ENCODE measurements at regions of chr7 and their contacts with region 1.

Region 1: DNA sequence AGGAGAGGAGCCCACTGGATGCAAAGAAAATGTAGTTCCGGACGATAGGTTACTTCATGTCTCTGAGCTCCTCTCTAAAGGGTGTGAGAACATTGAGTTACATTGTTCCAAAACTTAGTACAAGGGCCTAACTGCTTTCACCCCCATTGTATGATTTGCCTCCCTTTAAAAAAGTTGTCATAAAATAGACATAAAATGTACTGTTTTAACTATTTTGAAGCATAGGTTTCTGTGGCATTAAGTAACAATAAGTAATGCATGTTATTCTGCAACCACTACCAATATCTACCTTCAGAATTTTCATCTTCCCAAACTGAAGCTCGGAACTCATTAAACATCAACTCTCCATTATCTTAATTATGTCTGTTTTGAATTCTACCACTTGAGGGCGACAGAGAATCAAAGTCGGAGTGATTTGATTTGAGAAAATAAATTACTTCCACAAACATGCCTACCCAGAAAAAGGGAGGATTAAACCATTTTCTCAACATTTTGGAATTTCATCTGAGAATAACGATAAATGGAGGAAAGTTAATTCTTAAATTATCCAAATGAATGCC is 2.7 kb downstream of the IGFBP1 start:
- DNase-seq: peak in 3 of 9 donors; percentile 3 to 14 (median 9)
- ATAC-seq: no peak
- H3K4me3 ChIP-seq: no peak overlapping the region
- H3K4me3 Mint-ChIP-seq: no peak overlapping the region
- H3K27ac ChIP-seq: no peak overlapping the region
- H3K27ac Mint-ChIP-seq: no peak overlapping the region
- H3K4me1 ChIP-seq: no peaks in the 10 kb centered on the region
- H3K4me1 Mint-ChIP-seq: peaks cover 0 to 3% (median 0%) of the 10 kb centered on the region in 7 donors
- H3K27me3 ChIP-seq: no peaks in the 10 kb centered on the region
- H3K27me3 Mint-ChIP-seq: peaks cover 53 to 80% (median 65%) of the 10 kb centered on the region in 5 donors

Region 2: DNA sequence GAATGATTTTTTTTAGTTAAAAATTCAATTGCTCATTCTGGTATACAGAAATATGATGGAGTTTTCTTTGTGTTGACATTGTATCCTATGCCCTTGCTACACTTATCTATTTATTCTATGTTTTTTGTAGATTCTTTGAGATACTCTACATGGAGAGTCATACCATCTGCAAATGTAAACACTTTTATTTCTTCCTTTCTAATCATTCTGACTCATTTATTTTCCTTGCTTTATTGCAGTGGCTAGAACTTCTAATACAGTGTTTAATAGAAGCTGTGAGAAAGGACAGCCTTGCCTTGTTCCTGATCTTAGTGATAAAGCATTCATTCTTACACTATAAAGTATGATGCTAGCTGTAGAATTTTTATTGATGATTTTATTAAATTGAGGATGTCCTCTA is 40.0 kb after region 1 on chr7:
- CTCF ChIA-PET with region 1: no interaction called
- POLR2A ChIA-PET with region 1: no interaction called
- intact Hi-C with region 1: no loop called
- DNase-seq: no peak
- ATAC-seq: no peak
- H3K4me3 ChIP-seq: no peak overlapping the region
- H3K4me3 Mint-ChIP-seq: no peak overlapping the region
- H3K27ac ChIP-seq: no peak overlapping the region
- H3K27ac Mint-ChIP-seq: no peak overlapping the region
- H3K4me1 ChIP-seq: no peaks in the 10 kb centered on the region
- H3K4me1 Mint-ChIP-seq: peaks cover 0 to 4% (median 0%) of the 10 kb centered on the region in 7 donors
- H3K27me3 ChIP-seq: no peaks in the 10 kb centered on the region
- H3K27me3 Mint-ChIP-seq: peaks cover 4 to 31% (median 14%) of the 10 kb centered on the region in 5 donors

Region 3: DNA sequence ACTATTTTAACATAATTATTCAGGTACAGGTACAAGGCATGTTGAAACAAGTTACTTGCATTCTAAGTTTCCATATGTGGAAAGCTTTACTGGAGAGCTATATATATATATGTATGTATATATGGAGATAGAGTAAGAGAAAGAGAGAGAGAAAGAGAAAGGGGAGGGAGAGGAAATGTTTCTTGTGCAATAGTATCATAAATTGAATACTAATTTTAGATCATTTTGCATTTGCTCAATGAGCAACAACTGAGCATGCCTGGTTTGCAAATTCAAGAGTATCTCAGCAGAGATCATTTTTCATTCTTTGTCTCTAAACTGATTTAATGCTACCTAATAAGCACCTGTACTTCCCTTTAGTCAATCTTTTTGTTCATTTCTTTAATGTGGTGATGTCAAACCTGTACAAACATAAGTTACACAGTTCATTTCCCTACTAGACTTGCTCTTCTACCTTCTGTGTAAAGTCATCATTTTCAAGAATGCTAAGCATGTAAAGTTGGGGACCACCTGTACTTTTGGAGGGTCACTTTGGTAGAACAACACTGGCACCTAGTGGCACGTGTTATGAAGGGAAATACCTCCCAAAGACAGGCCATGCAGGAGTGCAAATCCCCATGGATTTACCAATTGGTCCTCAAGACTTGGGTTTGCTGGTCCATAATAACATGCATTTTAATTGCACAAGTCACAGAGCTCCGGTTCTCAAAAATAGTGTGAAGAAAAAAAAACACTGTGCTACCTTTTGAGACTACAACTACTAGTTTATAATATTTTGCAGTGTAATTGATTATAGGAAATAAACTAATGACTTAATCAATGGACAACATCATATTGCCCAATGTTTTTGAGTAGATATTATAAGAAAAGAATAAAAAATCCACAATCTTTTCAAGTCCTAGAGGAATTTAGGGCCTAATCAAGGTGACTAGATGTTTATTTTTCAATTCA is 461.3 kb after region 1 on chr7:
- CTCF ChIA-PET with region 1: no interaction called
- POLR2A ChIA-PET with region 1: no interaction called
- intact Hi-C with region 1: loop called in 1 of 2 experiments (anchors 1 kb)
- DNase-seq: peak in 2 of 9 donors; percentile 1 to 4
- ATAC-seq: no peak
- H3K4me3 ChIP-seq: no peak overlapping the region
- H3K4me3 Mint-ChIP-seq: no peak overlapping the region
- H3K27ac ChIP-seq: no peak overlapping the region
- H3K27ac Mint-ChIP-seq: no peak overlapping the region
- H3K4me1 ChIP-seq: no peaks in the 10 kb centered on the region
- H3K4me1 Mint-ChIP-seq: no peaks in the 10 kb centered on the region
- H3K27me3 ChIP-seq: no peaks in the 10 kb centered on the region
- H3K27me3 Mint-ChIP-seq: peaks cover 0 to 7% (median 0%) of the 10 kb centered on the region in 5 donors

Region 4: DNA sequence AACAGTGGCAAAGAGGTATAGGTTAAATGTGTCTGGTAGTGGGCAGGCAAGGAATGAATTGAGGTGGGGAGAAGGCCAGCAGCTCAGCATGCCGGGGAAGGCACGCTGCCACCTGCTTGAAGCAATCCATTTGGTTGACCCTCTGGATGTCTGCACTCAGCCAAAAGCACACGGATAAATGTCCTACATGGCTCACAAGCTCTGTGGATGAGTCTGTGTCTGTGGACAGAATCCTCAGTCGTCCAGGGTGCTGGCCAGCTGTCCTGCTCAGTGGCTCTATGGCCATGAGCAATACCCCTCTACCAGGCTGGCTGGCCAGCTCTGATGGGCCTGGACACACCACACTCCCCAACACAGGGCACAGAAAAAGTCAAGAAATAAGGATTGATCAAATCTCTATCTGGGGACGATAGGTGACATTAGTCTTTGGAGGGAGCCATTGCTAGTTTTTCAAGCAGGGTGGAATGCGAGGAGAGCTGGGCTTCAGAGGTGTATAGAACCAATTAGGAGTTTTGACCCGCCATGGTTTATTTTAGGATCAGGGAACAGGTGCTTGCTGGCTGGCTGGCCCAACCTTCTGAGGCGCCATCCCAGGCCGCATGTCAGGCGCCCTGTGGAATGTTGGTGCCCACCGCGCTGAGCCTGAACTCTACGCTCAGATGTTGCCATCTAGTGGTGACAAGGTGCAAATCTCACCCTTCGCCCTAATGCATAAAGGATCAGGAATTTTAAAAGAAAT is 1197.5 kb after region 1 on chr7:
- CTCF ChIA-PET with region 1: no interaction called
- POLR2A ChIA-PET with region 1: no interaction called
- intact Hi-C with region 1: loop called in 1 of 2 experiments (anchors 1 kb)
- DNase-seq: peak in 5 of 9 donors; percentile 2 to 18 (median 6)
- ATAC-seq: no peak
- H3K4me3 ChIP-seq: no peak overlapping the region
- H3K4me3 Mint-ChIP-seq: no peak overlapping the region
- H3K27ac ChIP-seq: no peak overlapping the region
- H3K27ac Mint-ChIP-seq: no peak overlapping the region
- H3K4me1 ChIP-seq: no peaks in the 10 kb centered on the region
- H3K4me1 Mint-ChIP-seq: no peaks in the 10 kb centered on the region
- H3K27me3 ChIP-seq: peaks cover 0 to 3% of the 10 kb centered on the region in 2 donors
- H3K27me3 Mint-ChIP-seq: peaks cover 0 to 23% (median 11%) of the 10 kb centered on the region in 5 donors

Region 5: GRCh38 chr7:47254081-47255006 is 1363.4 kb after region 1 on chr7:
- CTCF ChIA-PET with region 1: no interaction called
- POLR2A ChIA-PET with region 1: no interaction called
- intact Hi-C with region 1: loop called (anchors 1 kb)
- DNase-seq: peak in 7 of 9 donors; percentile 17 to 75 (median 39)
- ATAC-seq: peak; percentile 84
- H3K4me3 ChIP-seq: no peak overlapping the region
- H3K4me3 Mint-ChIP-seq: peak overlapping the region; percentile 42 to 81 (median 72)
- H3K27ac ChIP-seq: no peak overlapping the region
- H3K27ac Mint-ChIP-seq: no peak overlapping the region
- H3K4me1 ChIP-seq: no peaks in the 10 kb centered on the region
- H3K4me1 Mint-ChIP-seq: peaks cover 0 to 28% (median 20%) of the 10 kb centered on the region in 7 donors
- H3K27me3 ChIP-seq: peaks cover 0 to 2% of the 10 kb centered on the region in 2 donors
- H3K27me3 Mint-ChIP-seq: peaks cover 17 to 43% (median 28%) of the 10 kb centered on the region in 5 donors